IMR-90 (cell line): ENCODE measurements at regions of chr1 and their contacts with region 1.

Region 1: GRCh38 chr1:199780948-199781347 is 246.6 kb upstream of the NR5A2 start:
- DNase-seq: peak; percentile 70
- ATAC-seq: peak; percentile 74
- H3K4me3 ChIP-seq: no peak overlapping the region
- H3K27ac ChIP-seq: no peak overlapping the region
- H3K4me1 ChIP-seq: no peaks in the 10 kb centered on the region
- H3K27me3 ChIP-seq: no peaks in the 10 kb centered on the region
- CTCF ChIP-seq: no peak
- POLR2A ChIP-seq: no peak
- RAD21 ChIP-seq: no peak

Region 2: GRCh38 chr1:199102239-199102638 is 678.7 kb before region 1 on chr1:
- CTCF ChIA-PET with region 1: no interaction called
- POLR2A ChIA-PET with region 1: no interaction called
- dilution Hi-C with region 1: no loop called
- in situ Hi-C with region 1: no loop called
- intact Hi-C with region 1: no loop called
- DNase-seq: no peak
- ATAC-seq: no peak
- H3K4me3 ChIP-seq: no peak overlapping the region
- H3K27ac ChIP-seq: no peak overlapping the region
- H3K4me1 ChIP-seq: no peaks in the 10 kb centered on the region
- H3K27me3 ChIP-seq: no peaks in the 10 kb centered on the region
- CTCF ChIP-seq: no peak
- POLR2A ChIP-seq: no peak
- RAD21 ChIP-seq: no peak

Region 3: GRCh38 chr1:199574950-199575349 is 206.0 kb before region 1 on chr1:
- CTCF ChIA-PET with region 1: no interaction called
- POLR2A ChIA-PET with region 1: no interaction called
- dilution Hi-C with region 1: no loop called
- in situ Hi-C with region 1: no loop called
- intact Hi-C with region 1: no loop called
- DNase-seq: no peak
- ATAC-seq: no peak
- H3K4me3 ChIP-seq: no peak overlapping the region
- H3K27ac ChIP-seq: no peak overlapping the region
- H3K4me1 ChIP-seq: no peaks in the 10 kb centered on the region
- H3K27me3 ChIP-seq: peaks cover 2% of the 10 kb centered on the region; the same call in 1 of the 2 replicates
- CTCF ChIP-seq: no peak
- POLR2A ChIP-seq: no peak
- RAD21 ChIP-seq: no peak

Region 4: DNA sequence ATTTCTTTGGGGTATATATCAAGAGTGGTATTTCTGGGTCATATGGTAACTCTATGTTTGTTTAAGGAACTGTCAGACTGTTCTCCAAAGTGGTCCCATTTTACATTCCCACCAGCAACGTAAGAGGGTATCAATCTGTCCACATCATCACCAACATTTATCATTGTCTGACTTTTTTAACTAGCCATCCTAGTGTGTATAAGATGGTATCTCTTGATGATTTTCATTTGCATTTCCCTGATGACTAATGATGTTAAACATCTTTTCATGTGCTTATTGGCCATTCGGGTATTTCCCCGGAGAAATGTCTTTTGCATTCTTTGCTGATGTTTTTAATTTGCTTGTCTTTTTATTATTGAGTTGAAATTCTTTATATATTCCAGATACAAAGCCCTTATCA is 123.5 kb before region 1 on chr1:
- CTCF ChIA-PET with region 1: no interaction called
- POLR2A ChIA-PET with region 1: no interaction called
- dilution Hi-C with region 1: no loop called
- in situ Hi-C with region 1: no loop called
- intact Hi-C with region 1: no loop called
- DNase-seq: no peak
- ATAC-seq: no peak
- H3K4me3 ChIP-seq: no peak overlapping the region
- H3K27ac ChIP-seq: no peak overlapping the region
- H3K4me1 ChIP-seq: no peaks in the 10 kb centered on the region
- H3K27me3 ChIP-seq: peaks cover 6% of the 10 kb centered on the region
- CTCF ChIP-seq: no peak
- POLR2A ChIP-seq: no peak
- RAD21 ChIP-seq: no peak

Region 5: DNA sequence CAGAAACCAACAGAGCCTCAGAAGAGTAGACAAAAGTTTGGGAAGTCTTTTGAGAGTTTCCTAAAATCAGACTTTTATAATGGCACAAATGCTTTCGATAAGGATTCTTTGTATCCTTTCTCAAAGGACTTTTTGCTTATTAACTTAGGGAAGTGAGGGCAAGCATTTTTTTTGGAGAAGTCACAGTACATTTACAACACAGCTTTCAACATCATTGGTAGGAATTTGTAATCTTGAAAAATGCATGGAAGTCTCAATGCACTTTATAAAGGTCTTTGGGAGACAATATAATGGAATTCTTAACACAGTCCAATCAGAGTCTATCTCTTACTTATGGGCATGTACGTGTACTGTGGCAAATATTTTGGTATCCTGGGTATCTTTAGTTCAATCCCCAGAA is 79.2 kb before region 1 on chr1:
- CTCF ChIA-PET with region 1: no interaction called
- POLR2A ChIA-PET with region 1: no interaction called
- dilution Hi-C with region 1: no loop called
- in situ Hi-C with region 1: no loop called
- intact Hi-C with region 1: loop called (anchors 5 kb)
- DNase-seq: peak; percentile 14
- ATAC-seq: no peak; the same call in 1 of the 2 replicates
- H3K4me3 ChIP-seq: no peak overlapping the region
- H3K27ac ChIP-seq: no peak overlapping the region
- H3K4me1 ChIP-seq: no peaks in the 10 kb centered on the region
- H3K27me3 ChIP-seq: no peaks in the 10 kb centered on the region
- CTCF ChIP-seq: no peak
- POLR2A ChIP-seq: no peak
- RAD21 ChIP-seq: no peak

Region 6: DNA sequence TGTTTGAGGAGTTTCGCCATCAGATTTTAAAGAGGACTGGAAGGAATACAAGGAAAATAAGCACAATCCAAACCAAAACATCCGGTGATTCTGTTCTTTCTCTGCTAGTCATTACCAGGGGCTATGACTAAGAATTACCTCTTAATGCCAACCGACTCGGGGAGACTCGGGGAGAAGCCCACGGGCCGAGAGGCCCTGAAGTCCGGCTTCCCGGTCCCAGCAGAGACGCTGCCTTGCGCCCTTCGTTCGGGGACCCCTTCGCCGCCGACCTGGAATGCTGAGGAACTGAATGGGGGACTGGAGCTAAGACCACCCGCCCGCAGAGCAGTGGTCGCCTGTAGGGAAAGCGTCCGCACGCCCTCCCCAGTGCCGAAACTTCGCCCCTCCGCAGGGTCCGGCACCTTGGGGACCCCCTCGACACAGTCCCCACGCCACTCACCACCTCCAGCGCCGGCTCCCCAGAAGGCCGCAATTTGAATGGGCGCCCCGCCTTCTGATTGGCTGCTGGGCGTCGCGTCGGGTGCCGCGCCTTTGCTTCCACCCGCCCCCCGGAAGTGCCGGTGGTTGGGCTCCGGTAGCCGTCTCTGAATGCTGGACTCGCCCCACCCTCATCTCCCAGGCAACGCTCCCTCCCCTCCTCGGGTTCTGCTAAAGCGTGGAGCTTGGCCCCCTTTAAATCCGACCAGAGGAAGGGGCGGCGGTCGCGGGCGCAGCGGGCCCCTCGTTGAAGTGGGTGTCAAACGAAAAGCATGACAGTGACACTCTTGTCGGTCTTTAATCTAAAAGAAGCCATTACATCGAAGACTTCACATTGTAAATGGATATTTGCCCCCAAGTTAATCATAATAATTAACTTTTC is 839.6 kb after region 1 on chr1 and contains the start of gene KIF14:
- CTCF ChIA-PET with region 1: no interaction called
- POLR2A ChIA-PET with region 1: no interaction called
- dilution Hi-C with region 1: no loop called
- in situ Hi-C with region 1: no loop called
- intact Hi-C with region 1: no loop called
- DNase-seq: peak; percentile 82
- ATAC-seq: peak; percentile 100
- H3K4me3 ChIP-seq: peak within 1 kb of the TSS; percentile 88
- H3K27ac ChIP-seq: peak within 1 kb of the TSS; percentile 73
- H3K4me1 ChIP-seq: no peaks in the 10 kb centered on the region; the same call in 1 of the 2 replicates
- H3K27me3 ChIP-seq: no peaks in the 10 kb centered on the region
- CTCF ChIP-seq: no peak
- POLR2A ChIP-seq: peak; percentile 80
- RAD21 ChIP-seq: peak; percentile 13; the same call in 1 of the 2 replicates
- total RNA-seq, gene KIF14: 4.7 and 10.8 TPM in 2 replicates